Heart right ventricle (tissue), 16 donors: ENCODE measurements at regions of chr3 and their contacts with region 1.

Region 1: DNA sequence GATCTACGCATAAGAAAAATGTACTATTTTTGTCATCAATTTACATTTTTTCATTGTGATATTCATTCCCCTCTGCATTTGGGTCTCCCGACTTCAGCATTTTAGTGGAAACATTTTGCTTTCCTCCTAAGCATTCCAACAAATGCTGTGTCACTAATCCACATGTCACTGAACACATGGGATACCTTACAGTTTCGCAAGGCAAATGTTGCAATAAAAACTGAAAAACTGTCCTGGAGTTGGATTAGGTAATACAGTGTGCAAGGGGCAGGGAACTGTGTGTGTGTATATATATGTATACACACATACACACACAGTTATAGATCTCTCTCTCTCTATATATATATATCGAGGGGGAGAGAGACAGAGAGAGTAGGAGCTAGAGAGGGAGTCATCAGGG is 632.2 kb downstream of the MAGI1 start:
- DNase-seq: no peak
- ATAC-seq: no peak
- H3K4me3 ChIP-seq: no peak overlapping the region
- H3K27ac ChIP-seq: no peak overlapping the region
- H3K4me1 ChIP-seq: peaks cover 4 to 53% (median 40%) of the 10 kb centered on the region in 9 donors
- H3K27me3 ChIP-seq: no peaks in the 10 kb centered on the region
- CTCF ChIP-seq: no peak

Region 2: GRCh38 chr3:65186268-65186667 is 220.2 kb before region 1 on chr3:
- intact Hi-C with region 1: no loop called
- DNase-seq: no peak
- ATAC-seq: no peak
- H3K4me3 ChIP-seq: no peak overlapping the region
- H3K27ac ChIP-seq: no peak overlapping the region
- H3K4me1 ChIP-seq: peaks cover 2 to 23% (median 11%) of the 10 kb centered on the region in 9 donors
- H3K27me3 ChIP-seq: no peaks in the 10 kb centered on the region
- CTCF ChIP-seq: no peak

Region 3: DNA sequence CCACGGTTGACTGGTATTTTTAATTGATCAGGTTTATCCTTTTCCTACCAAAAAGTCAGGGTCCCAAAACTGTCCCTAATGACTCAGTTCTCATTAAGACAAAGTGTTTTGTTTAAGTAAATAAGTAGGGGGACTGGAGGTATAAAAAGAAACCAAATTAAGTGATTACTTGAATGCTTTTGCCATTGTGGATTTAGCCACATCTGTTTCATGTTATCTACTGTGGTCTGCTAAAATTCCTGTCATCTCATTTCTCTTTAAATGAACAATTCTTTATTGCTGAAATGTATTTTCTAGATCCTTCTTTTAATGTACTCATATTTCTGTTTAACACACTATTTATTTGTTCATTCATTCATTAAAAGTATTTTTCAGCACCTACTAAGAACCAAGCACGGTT is 92.8 kb before region 1 on chr3:
- intact Hi-C with region 1: no loop called
- DNase-seq: no peak
- ATAC-seq: no peak
- H3K4me3 ChIP-seq: no peak overlapping the region
- H3K27ac ChIP-seq: no peak overlapping the region
- H3K4me1 ChIP-seq: no peaks in the 10 kb centered on the region
- H3K27me3 ChIP-seq: no peaks in the 10 kb centered on the region
- CTCF ChIP-seq: no peak

Region 4: GRCh38 chr3:65342084-65342683 is 64.3 kb before region 1 on chr3:
- intact Hi-C with region 1: loop called in 2 of 10 experiments (anchors 5 to 10 kb)
- DNase-seq: peak; percentile 16 to 52
- ATAC-seq: peak in 3 of 8 donors; percentile 45 to 59 (median 50)
- H3K4me3 ChIP-seq: no peak overlapping the region
- H3K27ac ChIP-seq: no peak overlapping the region
- H3K4me1 ChIP-seq: peaks cover 0 to 36% (median 4%) of the 10 kb centered on the region in 9 donors
- H3K27me3 ChIP-seq: no peaks in the 10 kb centered on the region
- CTCF ChIP-seq: peak in 7 of 9 donors; percentile 50 to 65 (median 60)